ENCODE measurements at regions of chr18 and their contacts with region 1.

Region 1: GRCh38 chr18:48230467-48231113 is 178.6 kb downstream of the ZBTB7C start:
- DNase-seq: peak; percentile 65
- H3K4me3 Mint-ChIP-seq: no peak overlapping the region
- H3K27ac Mint-ChIP-seq: no peak overlapping the region
- H3K4me1 Mint-ChIP-seq: no peaks in the 10 kb centered on the region
- H3K27me3 Mint-ChIP-seq: peaks cover 81% of the 10 kb centered on the region
- CTCF ChIP-seq: peak; percentile 53

Region 2: GRCh38 chr18:48030616-48031480 is 199.7 kb before region 1 on chr18:
- CTCF ChIA-PET with region 1: no interaction called
- intact Hi-C with region 1: loop called (anchors 5 kb)
- DNase-seq: peak; percentile 66
- H3K4me3 Mint-ChIP-seq: no peak overlapping the region
- H3K27ac Mint-ChIP-seq: no peak overlapping the region
- H3K4me1 Mint-ChIP-seq: no peaks in the 10 kb centered on the region
- H3K27me3 Mint-ChIP-seq: peaks cover 24% of the 10 kb centered on the region
- CTCF ChIP-seq: peak; percentile 65

Region 3: GRCh38 chr18:48139431-48140347 is 90.9 kb before region 1 on chr18:
- CTCF ChIA-PET with region 1: no interaction called
- intact Hi-C with region 1: no loop called
- DNase-seq: peak; percentile 41
- H3K4me3 Mint-ChIP-seq: no peak overlapping the region
- H3K27ac Mint-ChIP-seq: no peak overlapping the region
- H3K4me1 Mint-ChIP-seq: no peaks in the 10 kb centered on the region
- H3K27me3 Mint-ChIP-seq: peaks cover 98% of the 10 kb centered on the region
- CTCF ChIP-seq: no peak

Region 4: DNA sequence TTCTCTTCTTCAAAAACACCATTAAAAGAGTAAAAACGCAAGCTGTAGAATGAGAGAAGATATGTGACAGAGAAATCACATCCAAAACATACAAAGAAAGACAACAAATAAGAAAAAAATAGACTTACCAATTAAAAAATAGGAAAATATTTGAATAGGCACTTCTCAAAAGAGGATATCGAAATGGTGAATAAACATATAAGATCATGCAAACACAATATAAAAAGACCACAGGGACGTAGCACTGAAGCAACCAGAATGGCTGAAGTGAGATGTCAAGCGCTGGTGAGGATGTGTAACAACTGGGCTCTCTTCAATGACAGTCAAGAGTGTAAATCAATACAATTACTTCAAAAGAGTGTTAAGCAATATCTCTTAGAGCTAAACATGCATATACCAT is 23.7 kb before region 1 on chr18:
- CTCF ChIA-PET with region 1: no interaction called
- intact Hi-C with region 1: loop called (anchors 1 kb)
- DNase-seq: no peak
- H3K4me3 Mint-ChIP-seq: no peak overlapping the region
- H3K27ac Mint-ChIP-seq: no peak overlapping the region
- H3K4me1 Mint-ChIP-seq: peaks cover 13% of the 10 kb centered on the region
- H3K27me3 Mint-ChIP-seq: peaks cover 51% of the 10 kb centered on the region
- CTCF ChIP-seq: no peak

Region 5: DNA sequence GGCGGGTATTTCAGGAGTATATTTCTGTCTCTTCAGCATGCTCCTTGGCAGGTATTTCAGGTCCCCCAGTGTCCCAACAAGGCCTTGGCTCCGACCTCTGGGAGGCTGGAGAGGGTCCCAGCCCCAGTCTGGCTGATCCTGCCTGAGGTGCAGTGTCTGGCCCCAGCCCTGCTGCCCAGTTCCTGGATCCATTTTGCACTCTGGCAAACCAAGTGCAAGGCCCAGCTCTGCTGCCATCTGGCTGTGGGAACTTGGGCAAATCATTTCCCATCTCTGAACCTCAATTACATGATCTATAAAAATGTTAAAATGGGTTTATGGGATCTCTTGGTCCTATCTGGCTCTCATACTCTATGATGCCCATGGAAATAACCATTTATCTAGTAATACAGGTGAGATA is 115.0 kb after region 1 on chr18:
- CTCF ChIA-PET with region 1: no interaction called
- intact Hi-C with region 1: loop called (anchors 2 kb)
- DNase-seq: peak; percentile 48
- H3K4me3 Mint-ChIP-seq: no peak overlapping the region
- H3K27ac Mint-ChIP-seq: no peak overlapping the region
- H3K4me1 Mint-ChIP-seq: no peaks in the 10 kb centered on the region
- H3K27me3 Mint-ChIP-seq: peaks cover 62% of the 10 kb centered on the region
- CTCF ChIP-seq: no peak

Region 6: DNA sequence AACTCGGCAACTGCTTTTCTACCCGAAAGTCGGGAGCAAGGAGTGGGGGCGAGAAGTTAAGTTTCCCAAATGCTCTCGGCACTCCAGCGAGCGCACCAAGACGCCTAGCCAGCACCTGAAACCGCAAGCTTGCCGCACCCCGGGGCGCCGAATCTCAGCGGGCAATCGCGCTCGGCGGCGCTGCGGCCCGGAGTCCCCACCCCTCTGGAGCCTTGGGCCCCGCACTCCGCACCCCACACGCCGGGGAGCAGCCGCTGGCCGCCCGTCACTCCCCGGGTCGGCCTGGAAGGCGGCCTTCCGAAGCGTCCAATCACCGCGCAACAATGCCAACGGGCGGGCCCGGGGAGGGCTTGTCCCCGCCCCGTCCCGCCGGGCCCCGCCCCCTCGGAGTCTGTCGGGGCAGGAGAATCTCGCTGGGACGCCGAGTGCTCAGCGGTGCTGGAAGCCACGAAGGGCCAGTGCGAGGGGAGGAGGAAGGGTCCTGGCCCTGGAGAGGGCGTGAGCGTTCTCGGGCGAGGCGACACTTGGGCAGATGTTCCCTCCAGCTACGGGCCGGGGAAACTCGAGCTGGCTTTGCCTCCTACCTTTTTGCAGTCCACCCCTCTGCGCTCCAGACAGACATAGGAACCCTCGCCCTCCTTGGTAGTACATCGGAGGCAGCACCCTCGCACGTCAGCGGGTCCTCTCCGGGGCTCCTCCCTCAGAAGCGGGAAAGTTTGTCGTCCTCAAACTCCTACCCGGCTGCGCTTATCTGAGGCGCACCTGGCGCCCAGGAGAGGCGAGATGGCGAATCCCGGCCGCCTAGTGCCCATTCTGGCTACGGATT is 179.7 kb after region 1 on chr18:
- CTCF ChIA-PET with region 1: no interaction called
- intact Hi-C with region 1: loop called (anchors 10 kb)
- DNase-seq: peak; percentile 94
- H3K4me3 Mint-ChIP-seq: peak overlapping the region; percentile 75
- H3K27ac Mint-ChIP-seq: no peak overlapping the region
- H3K4me1 Mint-ChIP-seq: peaks cover 7% of the 10 kb centered on the region
- H3K27me3 Mint-ChIP-seq: peaks cover 85% of the 10 kb centered on the region
- CTCF ChIP-seq: no peak

Region 7: DNA sequence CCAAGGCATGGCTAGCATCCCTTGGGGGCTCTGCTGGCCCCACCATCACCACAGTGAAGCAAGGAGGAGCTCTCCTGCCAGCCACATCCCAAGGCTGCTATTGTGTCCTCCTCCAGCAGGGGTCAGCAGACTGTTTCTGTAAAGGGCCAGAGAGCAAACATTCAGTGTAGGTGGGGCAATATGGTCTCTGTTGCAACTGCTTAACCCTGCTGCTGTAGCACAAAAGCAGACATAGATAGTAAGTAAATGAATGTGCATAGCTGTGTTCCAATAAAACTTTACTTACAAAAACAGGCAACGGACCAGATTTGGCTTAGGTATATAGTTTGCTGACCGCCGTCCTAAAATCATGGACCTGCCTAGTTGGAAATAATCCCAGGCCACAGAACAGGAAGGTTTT is 214.9 kb after region 1 on chr18:
- CTCF ChIA-PET with region 1: interaction called, 4 read pairs
- intact Hi-C with region 1: loop called (anchors 2 kb)
- DNase-seq: peak; percentile 89
- H3K4me3 Mint-ChIP-seq: no peak overlapping the region
- H3K27ac Mint-ChIP-seq: no peak overlapping the region
- H3K4me1 Mint-ChIP-seq: no peaks in the 10 kb centered on the region
- H3K27me3 Mint-ChIP-seq: peaks cover 71% of the 10 kb centered on the region
- CTCF ChIP-seq: peak; percentile 91